Activated CD4-positive, alpha-beta memory T cell treated with anti-CD3 and anti-CD28 coated beads for 36 hours (primary cell): ENCODE measurements at regions of chr7 and their contacts with region 1.

Region 1: DNA sequence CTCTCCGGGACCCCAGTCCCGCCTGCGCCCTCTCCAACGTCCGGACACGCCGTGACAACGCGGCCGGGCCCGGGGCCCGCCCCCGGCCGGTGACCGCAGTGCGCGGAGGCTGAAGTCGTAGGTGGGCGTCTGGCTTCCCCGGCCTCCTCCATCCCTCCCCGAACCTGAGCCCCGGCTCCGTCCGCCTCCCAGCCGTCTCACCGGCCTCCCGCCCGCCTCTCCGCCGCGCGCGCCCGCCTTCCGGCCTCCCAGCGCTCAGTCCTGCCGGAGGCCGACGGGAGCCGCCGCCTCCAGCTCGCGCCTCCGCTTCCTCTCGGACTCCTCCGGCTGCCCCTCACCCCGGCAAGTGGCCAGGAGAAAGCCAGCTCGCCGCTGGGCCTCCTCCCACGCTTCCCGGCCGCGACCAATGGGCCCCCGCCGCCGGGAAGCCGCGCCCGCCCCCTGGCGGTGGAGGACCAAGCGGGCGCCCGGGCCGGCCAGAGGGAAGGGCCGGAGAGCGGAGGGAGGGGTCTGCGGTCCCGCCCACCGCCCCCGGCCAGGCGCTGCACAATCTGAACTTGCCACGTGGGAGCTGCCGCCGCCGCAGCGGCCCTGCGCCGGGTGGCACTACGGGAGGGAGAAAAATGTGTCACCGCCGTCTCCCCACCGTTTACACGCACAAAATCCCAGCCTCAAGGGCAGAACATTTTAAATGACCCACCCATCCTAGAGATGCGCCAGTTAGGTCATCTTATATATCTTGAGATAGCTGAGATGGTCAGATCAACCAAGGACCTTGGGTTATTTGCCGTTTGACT is at the start of gene FAM3C:
- DNase-seq: peak; percentile 92
- H3K4me3 Mint-ChIP-seq: peak within 1 kb of the TSS; percentile 85
- H3K27ac Mint-ChIP-seq: peak within 1 kb of the TSS; percentile 90
- H3K4me1 Mint-ChIP-seq: peaks cover 36% of the 10 kb centered on the region
- H3K27me3 Mint-ChIP-seq: no peaks in the 10 kb centered on the region
- total RNA-seq, gene FAM3C: 17.2 to 18.3 TPM

Region 2: DNA sequence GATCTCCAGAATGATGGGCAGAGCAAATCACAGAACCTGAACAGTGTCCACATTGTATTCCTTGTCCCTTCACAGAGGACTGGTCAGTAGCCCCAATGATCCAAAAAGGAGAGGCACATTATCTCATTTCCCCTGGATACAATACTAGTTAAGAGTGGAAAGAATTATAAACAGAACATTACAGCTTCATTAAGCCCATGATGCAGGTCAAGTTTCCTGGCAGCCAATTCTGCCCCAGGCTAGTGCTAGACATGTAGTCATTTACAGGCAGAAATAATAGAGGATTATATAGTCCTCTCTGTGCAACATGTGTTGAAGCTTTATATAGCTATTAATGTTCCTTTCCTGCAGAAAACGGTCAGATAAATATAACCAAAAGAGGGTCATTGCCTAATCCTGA is 191.6 kb before region 1 on chr7:
- CTCF ChIA-PET with region 1: no interaction called
- POLR2A ChIA-PET with region 1: no interaction called
- intact Hi-C with region 1: no loop called
- DNase-seq: no peak
- H3K4me3 Mint-ChIP-seq: no peak overlapping the region
- H3K27ac Mint-ChIP-seq: no peak overlapping the region
- H3K4me1 Mint-ChIP-seq: no peaks in the 10 kb centered on the region
- H3K27me3 Mint-ChIP-seq: peaks cover 2% of the 10 kb centered on the region

Region 3: GRCh38 chr7:121366852-121367431 is 29.2 kb before region 1 on chr7:
- CTCF ChIA-PET with region 1: interaction called, 31 read pairs
- POLR2A ChIA-PET with region 1: interaction called, 3 read pairs
- intact Hi-C with region 1: loop called (anchors 2 kb)
- DNase-seq: no peak
- H3K4me3 Mint-ChIP-seq: no peak overlapping the region
- H3K27ac Mint-ChIP-seq: no peak overlapping the region
- H3K4me1 Mint-ChIP-seq: peaks cover 8% of the 10 kb centered on the region
- H3K27me3 Mint-ChIP-seq: no peaks in the 10 kb centered on the region

Region 4: DNA sequence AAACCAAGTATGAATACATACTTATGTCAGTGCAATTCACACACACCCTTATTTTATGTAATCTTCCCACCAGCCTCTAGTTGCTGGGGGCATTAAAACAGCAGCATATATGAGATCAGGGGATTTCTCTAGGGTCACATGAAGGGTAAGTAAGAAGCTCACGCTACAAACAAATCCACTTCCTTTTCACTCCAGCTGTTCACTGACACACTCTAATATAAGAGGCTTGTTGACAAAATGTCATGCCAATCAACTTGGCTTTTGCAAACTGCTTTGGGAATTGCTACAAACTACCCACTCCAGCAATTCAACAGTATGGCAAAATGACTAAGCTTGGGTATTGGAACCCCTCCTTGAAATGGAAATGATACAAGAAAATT is 10.4 kb before region 1 on chr7:
- CTCF ChIA-PET with region 1: interaction called, 19 read pairs
- POLR2A ChIA-PET with region 1: interaction called, 3 read pairs
- intact Hi-C with region 1: no loop called
- DNase-seq: no peak
- H3K4me3 Mint-ChIP-seq: no peak overlapping the region
- H3K27ac Mint-ChIP-seq: no peak overlapping the region
- H3K4me1 Mint-ChIP-seq: peaks cover 59% of the 10 kb centered on the region
- H3K27me3 Mint-ChIP-seq: no peaks in the 10 kb centered on the region

Region 5: DNA sequence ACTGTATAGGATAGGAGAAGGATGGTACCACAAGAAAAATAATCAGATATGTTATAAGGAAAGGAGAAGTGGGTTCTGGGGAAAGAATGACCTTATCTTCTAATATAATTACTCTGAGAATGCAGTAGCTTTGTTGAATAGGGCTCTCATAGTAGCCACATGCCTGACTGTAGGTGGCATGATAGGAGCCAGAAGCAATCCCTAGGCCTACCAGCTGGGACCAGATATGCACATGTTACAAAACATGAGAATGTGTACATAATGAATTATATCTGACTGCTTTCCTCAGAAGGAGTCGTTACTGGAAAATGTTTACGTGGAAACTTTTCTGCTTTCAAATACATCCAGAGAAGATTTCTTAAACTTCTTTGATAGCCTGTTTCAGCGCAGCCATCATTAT is 53.2 kb after region 1 on chr7:
- CTCF ChIA-PET with region 1: no interaction called
- POLR2A ChIA-PET with region 1: no interaction called
- intact Hi-C with region 1: no loop called
- DNase-seq: no peak
- H3K4me3 Mint-ChIP-seq: no peak overlapping the region
- H3K27ac Mint-ChIP-seq: no peak overlapping the region
- H3K4me1 Mint-ChIP-seq: no peaks in the 10 kb centered on the region
- H3K27me3 Mint-ChIP-seq: peaks cover 1% of the 10 kb centered on the region

Region 6: GRCh38 chr7:121500360-121501058 is 104.3 kb after region 1 on chr7:
- CTCF ChIA-PET with region 1: interaction called, 4 read pairs
- POLR2A ChIA-PET with region 1: no interaction called
- intact Hi-C with region 1: loop called (anchors 1 kb)
- DNase-seq: peak; percentile 33
- H3K4me3 Mint-ChIP-seq: no peak overlapping the region
- H3K27ac Mint-ChIP-seq: peak overlapping the region; percentile 32
- H3K4me1 Mint-ChIP-seq: peaks cover 17% of the 10 kb centered on the region
- H3K27me3 Mint-ChIP-seq: no peaks in the 10 kb centered on the region